Pancreas (tissue), 10 donors: ENCODE measurements at regions of chr11 and their contacts with region 1.

Region 1: GRCh38 chr11:57237204-57237681 is at the start of gene APLNR:
- DNase-seq: no peak
- ATAC-seq: no peak
- H3K4me3 ChIP-seq: peak within 1 kb of the TSS in 1 of 4 donors; percentile 6
- H3K27ac ChIP-seq: no peak within 1 kb of the TSS
- H3K4me1 ChIP-seq: no peaks in the 10 kb centered on the region
- H3K27me3 ChIP-seq: no peaks in the 10 kb centered on the region
- CTCF ChIP-seq: no peak
- total RNA-seq, gene APLNR: 0.41 to 7.3 (median 1.7) TPM

Region 2: GRCh38 chr11:56841210-56841810 is 395.9 kb before region 1 on chr11:
- intact Hi-C with region 1: loop called in 1 of 3 experiments (anchors 5 kb)
- DNase-seq: peak in 3 of 6 donors; percentile 12 to 62 (median 27)
- ATAC-seq: peak in 3 of 4 donors; percentile 85 to 88 (median 85)
- H3K4me3 ChIP-seq: no peak overlapping the region
- H3K27ac ChIP-seq: no peak overlapping the region
- H3K4me1 ChIP-seq: peaks cover 0 to 3% (median 0%) of the 10 kb centered on the region in 3 donors
- H3K27me3 ChIP-seq: no peaks in the 10 kb centered on the region
- CTCF ChIP-seq: peak; percentile 32 to 57 (median 42)

Region 3: GRCh38 chr11:57131080-57131790 is 106.0 kb before region 1 on chr11:
- intact Hi-C with region 1: loop called in 2 of 3 experiments (anchors 10 kb)
- DNase-seq: peak in 2 of 6 donors; percentile 28 to 50
- ATAC-seq: peak in 3 of 4 donors; percentile 65 to 82 (median 78)
- H3K4me3 ChIP-seq: no peak overlapping the region
- H3K27ac ChIP-seq: no peak overlapping the region
- H3K4me1 ChIP-seq: no peaks in the 10 kb centered on the region
- H3K27me3 ChIP-seq: peaks cover 0 to 4% (median 0%) of the 10 kb centered on the region in 4 donors
- CTCF ChIP-seq: peak in 2 of 4 donors; percentile 7 to 24

Region 4: GRCh38 chr11:57358543-57358961 is 121.3 kb after region 1 on chr11:
- intact Hi-C with region 1: no loop called
- DNase-seq: no peak
- ATAC-seq: peak in 1 of 4 donors; percentile 20
- H3K4me3 ChIP-seq: no peak overlapping the region
- H3K27ac ChIP-seq: peak overlapping the region in 3 of 4 donors; percentile 39 to 58 (median 43)
- H3K4me1 ChIP-seq: peaks cover 0 to 8% (median 0%) of the 10 kb centered on the region in 3 donors
- H3K27me3 ChIP-seq: no peaks in the 10 kb centered on the region
- CTCF ChIP-seq: no peak